Right ventricle myocardium inferior (tissue), 1 donor: ENCODE measurements at regions of chr11 and their contacts with region 1.

Region 1: DNA sequence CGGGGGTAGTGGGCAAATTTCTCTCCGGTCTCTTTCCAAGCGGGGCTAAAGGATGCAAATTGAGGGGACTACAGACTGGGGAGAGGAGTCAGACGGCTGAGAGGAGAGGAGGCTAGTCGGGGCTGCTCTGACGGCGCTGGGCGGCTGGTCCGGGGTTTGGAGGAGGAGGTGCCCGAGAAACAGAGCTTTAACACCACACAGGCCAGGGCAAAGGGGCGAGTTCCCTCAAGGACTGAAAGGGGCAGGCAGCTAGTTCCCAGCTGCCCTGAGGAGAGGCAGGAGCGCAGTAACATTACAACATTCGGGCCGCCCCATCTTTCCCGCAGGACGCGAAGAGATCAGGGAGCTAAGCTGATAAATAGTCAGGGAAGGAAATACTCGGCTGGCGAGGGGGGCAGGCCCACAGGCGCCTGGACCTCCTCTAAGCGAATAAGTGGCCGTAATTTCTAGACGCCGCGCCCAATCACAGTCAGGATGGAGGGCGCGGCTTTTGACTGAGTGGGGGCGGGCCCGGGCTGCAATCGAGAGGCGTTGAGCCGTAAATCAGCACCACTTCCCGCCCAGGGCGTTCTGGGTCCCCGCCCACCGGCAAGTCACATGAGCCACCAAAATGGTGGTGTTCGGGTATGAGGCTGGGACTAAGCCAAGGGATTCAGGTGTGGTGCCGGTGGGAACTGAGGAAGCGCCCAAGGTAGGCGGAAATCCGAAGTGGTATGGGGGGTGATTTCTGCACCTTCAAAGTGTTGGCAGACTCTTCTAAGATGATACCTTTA is at the start of gene TMEM126B:
- DNase-seq: peak; percentile 99
- ATAC-seq: peak; percentile 100
- total RNA-seq, gene TMEM126B: 64.3 TPM

Region 2: GRCh38 chr11:85582111-85582510 is 46.1 kb before region 1 on chr11:
- intact Hi-C with region 1: no loop called
- DNase-seq: no peak
- ATAC-seq: no peak

Region 3: GRCh38 chr11:85647604-85648299 is 19.6 kb after region 1 on chr11 and contains the start of gene TMEM126A:
- intact Hi-C with region 1: loop called (anchors 2 kb)
- DNase-seq: peak; percentile 96
- ATAC-seq: peak; percentile 99
- total RNA-seq, gene TMEM126A: 77.9 TPM

Region 4: GRCh38 chr11:85699957-85700741 is 72.0 kb after region 1 on chr11:
- intact Hi-C with region 1: no loop called
- DNase-seq: no peak
- ATAC-seq: no peak